ENCODE measurements at regions of chr3 and their contacts with region 1.

Region 1: DNA sequence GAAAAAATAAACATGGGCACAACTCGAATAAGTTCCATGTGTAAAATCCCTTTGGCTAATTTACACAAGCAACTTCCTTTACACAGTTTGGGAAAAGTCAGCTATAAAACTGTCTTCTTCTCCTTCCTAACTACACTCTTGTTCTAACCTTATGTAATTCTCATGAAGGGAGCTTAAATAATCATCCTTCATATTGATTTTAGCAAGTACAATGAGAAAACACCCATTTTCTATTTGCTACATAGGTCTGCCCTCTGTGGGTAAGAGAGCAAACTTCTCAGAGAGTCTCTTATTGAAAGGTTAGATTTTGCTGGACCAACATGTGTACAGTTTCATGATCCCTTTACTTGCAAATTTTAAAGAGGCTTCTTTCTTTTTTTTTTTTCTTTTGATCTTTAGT is 398.5 kb downstream of the ROBO1 start:
- DNase-seq: peak; percentile 30
- ATAC-seq: peak; percentile 66; the same call in 1 of the 2 replicates
- H3K4me3 ChIP-seq: no peak overlapping the region
- H3K27ac ChIP-seq: no peak overlapping the region
- H3K4me1 ChIP-seq: peaks cover 14% of the 10 kb centered on the region
- H3K27me3 ChIP-seq: 0 out of 2 replicates have a peak, but pooled peaks cover 14% of the 10 kb centered on the region
- CTCF ChIP-seq: peak; percentile 58

Region 2: DNA sequence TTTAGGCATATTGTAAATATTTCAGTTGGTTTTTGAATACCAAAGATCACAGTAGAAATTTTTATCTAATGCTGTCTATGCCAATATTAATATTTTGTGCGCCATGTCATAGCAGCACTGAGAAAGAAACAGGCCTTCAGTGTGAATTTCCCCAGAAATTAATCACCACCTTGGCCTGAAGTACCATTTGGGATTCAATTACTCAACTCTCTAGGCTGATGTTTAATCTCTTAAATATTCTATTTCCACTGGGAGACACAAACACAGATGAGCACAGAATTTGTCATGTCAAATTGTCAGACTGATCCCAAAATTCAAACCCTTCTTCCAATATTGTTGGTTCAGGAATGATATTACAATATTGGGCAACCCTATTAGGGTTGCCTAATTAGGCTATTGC is 110.8 kb before region 1 on chr3:
- CTCF ChIA-PET with region 1: no interaction called
- POLR2A ChIA-PET with region 1: no interaction called
- intact Hi-C with region 1: no loop called
- DNase-seq: no peak
- ATAC-seq: no peak
- H3K4me3 ChIP-seq: no peak overlapping the region
- H3K27ac ChIP-seq: no peak overlapping the region
- H3K4me1 ChIP-seq: no peaks in the 10 kb centered on the region
- H3K27me3 ChIP-seq: no peaks in the 10 kb centered on the region; the same call in 1 of the 2 replicates
- CTCF ChIP-seq: no peak

Region 3: GRCh38 chr3:79314549-79314948 is 54.8 kb before region 1 on chr3:
- CTCF ChIA-PET with region 1: no interaction called
- POLR2A ChIA-PET with region 1: no interaction called
- intact Hi-C with region 1: no loop called
- DNase-seq: peak; percentile 38
- ATAC-seq: peak; percentile 31; the same call in 1 of the 2 replicates
- H3K4me3 ChIP-seq: no peak overlapping the region
- H3K27ac ChIP-seq: no peak overlapping the region
- H3K4me1 ChIP-seq: no peaks in the 10 kb centered on the region
- H3K27me3 ChIP-seq: peaks cover 15% of the 10 kb centered on the region; the same call in 1 of the 2 replicates
- CTCF ChIP-seq: no peak

Region 4: GRCh38 chr3:79497447-79498111 is 128.3 kb after region 1 on chr3:
- CTCF ChIA-PET with region 1: no interaction called
- POLR2A ChIA-PET with region 1: no interaction called
- intact Hi-C with region 1: loop called (anchors 2 kb)
- DNase-seq: peak; percentile 50
- ATAC-seq: no peak
- H3K4me3 ChIP-seq: no peak overlapping the region
- H3K27ac ChIP-seq: no peak overlapping the region
- H3K4me1 ChIP-seq: no peaks in the 10 kb centered on the region
- H3K27me3 ChIP-seq: no peaks in the 10 kb centered on the region
- CTCF ChIP-seq: peak; percentile 81

Measured in PC-3 (cell line).